Left cardiac atrium (tissue), 4 donors: ENCODE measurements at regions of chr20 and their contacts with region 1.

Region 1: DNA sequence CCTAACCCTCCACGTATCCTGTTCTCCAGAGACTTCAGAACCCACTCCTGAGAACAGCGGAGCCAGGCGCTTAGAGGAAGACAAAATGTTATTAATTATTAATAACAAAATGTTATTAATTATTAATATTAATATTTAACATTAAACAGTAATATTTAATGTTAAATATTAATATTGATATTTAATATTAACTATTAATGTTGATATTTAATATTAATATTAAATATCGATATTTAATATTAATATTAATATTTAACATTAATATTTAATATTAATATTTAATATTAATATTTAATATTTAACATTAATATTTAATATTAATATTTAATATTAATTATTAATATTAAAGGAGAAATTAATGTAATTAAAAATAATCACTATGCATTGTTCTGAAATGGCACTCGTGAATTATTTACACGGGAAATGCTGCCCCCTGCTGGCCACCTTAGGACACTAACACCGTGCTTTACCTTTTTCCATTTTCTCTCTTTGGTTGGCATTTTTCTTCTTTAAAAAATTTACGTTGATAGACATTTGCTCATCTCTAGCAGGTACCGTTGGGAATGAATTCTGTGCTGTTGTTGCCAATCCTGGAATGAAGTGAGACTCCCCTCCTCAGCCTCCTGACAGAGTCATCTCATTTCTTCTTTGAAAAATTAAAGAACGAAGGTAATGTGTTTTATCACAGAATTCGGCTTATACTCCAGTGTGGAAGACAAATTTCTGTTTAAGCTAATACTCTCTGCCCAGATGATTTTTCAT is 7.5 kb upstream of the GGTLC1 start:
- DNase-seq: peak; percentile 69
- ATAC-seq: no peak

Region 2: DNA sequence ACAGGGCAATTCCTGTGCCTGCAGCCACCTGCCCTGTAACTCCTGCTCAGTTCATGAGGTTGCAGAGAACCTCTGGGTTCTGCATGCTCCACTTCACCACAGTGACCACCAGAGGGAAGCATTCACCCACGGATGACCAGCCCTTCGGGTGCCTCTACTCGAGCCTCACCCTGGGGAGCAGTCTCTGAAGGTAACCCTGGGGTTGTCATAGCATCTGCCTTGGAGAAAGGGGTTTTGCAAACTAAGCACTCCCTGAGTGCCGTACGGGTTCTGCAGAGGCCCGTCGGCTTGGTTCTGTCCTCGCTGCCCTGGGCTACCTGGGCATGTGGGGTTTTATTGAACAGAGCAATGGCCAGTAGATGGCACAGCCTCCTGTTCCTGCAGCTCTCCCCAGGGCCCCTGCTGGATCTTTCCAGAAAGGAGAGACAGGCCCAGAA is 106.3 kb before region 1 on chr20:
- intact Hi-C with region 1: loop called in 1 of 2 experiments (anchors 5 kb)
- DNase-seq: peak; percentile 52
- ATAC-seq: peak; percentile 80 to 85

Region 3: GRCh38 chr20:23920417-23921325 is 75.4 kb before region 1 on chr20:
- intact Hi-C with region 1: loop called in 1 of 2 experiments (anchors 10 kb)
- DNase-seq: no peak
- ATAC-seq: peak; percentile 31 to 59

Region 4: DNA sequence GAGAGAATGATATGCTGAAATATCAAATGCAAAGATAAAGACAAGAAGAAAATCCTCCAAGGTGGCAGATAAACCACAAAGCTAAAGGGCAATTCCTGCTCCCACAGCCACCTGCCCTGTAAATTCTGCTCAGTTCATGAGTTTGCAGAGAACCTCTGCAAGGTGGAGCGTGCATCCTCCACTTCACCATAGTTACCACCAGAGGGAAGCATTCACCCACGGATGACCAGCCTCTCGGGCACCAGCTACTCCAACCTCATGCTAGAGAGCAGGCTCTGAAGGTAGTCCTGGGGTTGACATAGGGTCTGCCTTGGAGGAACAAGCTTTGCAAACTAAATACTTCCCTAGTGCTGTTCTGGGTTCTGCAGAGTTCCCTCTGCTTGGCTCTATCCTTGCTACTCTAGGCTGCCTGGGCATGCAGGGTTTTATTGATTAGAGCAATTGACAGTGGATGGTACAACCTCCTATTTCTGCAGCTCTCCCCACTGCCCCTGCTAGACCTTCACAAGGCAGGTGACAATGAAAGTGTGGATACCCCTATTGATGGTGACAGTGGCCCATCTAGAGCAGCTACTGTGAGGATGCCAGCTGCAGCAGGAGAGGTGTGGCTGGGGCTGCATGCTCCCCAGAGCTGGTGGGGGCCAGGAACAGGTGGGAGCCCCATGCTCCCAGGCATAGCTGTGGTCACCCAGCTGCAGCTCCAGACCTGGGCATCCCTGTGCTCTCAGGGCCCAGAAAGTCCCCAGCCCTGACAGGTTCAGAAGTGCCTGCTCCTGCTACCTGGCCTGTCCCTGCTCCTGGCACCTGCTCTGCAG is 58.6 kb before region 1 on chr20:
- intact Hi-C with region 1: loop called in 1 of 2 experiments (anchors 5 kb)
- DNase-seq: peak; percentile 43
- ATAC-seq: peak; percentile 95 to 97